Heart left ventricle (tissue), 16 donors: ENCODE measurements at regions of chr9 and their contacts with region 1.

Region 1: DNA sequence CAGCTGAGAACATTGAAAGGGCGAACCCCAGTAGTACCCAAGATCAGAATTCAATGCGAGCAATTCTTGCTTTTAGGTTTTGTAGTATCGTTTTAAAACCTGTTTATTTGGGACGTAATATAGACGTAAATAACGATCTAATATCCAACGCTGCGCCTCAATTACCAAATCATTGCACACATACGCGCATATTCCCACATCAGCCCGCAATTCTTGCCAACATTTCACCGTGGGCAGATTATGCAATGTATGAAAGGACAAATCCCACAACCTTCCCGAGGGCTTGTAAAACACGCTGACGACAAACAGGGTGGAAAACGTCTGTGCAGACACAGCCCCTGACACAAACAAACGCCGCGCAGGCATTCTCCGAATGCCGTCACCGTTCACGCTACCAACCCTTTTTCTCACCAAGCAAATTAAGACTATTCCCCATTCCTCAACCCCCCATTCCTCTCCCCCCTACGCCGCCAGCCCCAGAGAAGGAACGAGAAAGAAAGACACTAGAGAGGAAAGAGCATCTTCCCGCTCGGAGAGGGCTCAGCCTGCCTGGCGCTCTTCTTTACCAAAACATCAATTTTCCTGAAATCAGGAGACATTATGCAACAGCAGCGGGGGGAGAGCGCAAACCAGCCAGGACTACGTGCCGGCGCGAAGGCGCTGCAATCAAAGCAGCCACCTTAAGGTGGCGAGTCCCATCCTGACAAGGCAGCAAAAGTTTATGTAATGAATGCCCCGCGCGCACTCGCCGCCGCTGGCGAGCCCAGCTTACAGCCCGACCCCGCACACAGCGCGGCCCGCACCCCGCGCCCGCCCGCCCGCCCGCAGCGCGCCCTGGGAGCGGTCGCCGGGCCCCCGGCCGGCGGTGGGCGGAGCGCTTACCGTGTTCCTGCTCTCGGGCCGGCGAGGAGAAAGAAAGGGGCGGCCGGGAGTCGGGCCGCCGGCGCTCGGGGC is 597 bp downstream of the NFIL3 start:
- DNase-seq: peak; percentile 52 to 71 (median 69)
- ATAC-seq: peak; percentile 14 to 51 (median 34)
- H3K4me3 ChIP-seq: peak overlapping the region; percentile 44 to 88 (median 72)
- H3K27ac ChIP-seq: peak overlapping the region; percentile 86 to 97 (median 93)
- H3K4me1 ChIP-seq: peaks cover 0 to 65% (median 32%) of the 10 kb centered on the region in 12 donors
- H3K27me3 ChIP-seq: no peaks in the 10 kb centered on the region
- CTCF ChIP-seq: peak in 8 of 12 donors; percentile 5 to 53 (median 19)
- POLR2A ChIP-seq: peak in 1 of 2 donors; percentile 32

Region 2: GRCh38 chr9:90607701-90608516 is 815.1 kb before region 1 on chr9:
- intact Hi-C with region 1: no loop called
- DNase-seq: no peak
- ATAC-seq: no peak
- H3K4me3 ChIP-seq: no peak overlapping the region
- H3K27ac ChIP-seq: no peak overlapping the region
- H3K4me1 ChIP-seq: no peaks in the 10 kb centered on the region
- H3K27me3 ChIP-seq: peaks cover 0 to 15% (median 0%) of the 10 kb centered on the region in 9 donors
- CTCF ChIP-seq: no peak
- POLR2A ChIP-seq: no peak

Region 3: DNA sequence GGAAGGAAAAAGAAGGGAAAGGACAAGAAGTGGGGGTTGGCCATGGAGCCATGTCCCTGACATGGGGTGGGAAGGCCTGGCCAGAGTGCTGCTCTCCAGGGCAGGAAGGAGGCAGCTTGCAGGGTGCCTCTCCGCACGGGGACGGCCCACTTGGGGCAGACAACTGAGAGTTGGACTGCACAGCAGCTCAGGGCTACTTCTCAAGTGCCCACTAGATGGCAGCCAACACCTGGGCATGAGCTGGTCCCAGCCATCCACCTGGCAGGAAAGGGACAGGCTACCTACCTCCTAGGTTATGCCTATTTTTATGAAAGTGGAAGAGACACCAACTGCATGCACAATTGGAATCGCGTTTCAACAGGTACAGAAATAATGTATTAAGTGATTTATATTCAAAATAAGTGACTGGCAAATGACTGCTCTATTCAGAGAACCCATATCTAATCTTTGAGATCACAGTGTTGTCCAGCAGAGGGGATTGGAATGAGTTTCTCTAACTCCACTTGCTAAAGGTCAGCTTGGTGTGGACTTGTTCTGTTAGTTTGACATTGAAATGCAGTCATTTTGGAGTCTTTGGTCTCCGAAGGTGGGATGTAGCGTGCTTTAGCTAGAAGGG is 508.1 kb before region 1 on chr9:
- intact Hi-C with region 1: loop called in 7 of 10 experiments (anchors 2 to 5 kb)
- DNase-seq: peak; percentile 61 to 83 (median 72)
- ATAC-seq: peak; percentile 66 to 90 (median 85)
- H3K4me3 ChIP-seq: no peak overlapping the region
- H3K27ac ChIP-seq: no peak overlapping the region
- H3K4me1 ChIP-seq: peaks cover 0 to 4% (median 0%) of the 10 kb centered on the region in 12 donors
- H3K27me3 ChIP-seq: peaks cover 0 to 7% (median 0%) of the 10 kb centered on the region in 9 donors
- CTCF ChIP-seq: peak; percentile 76 to 95 (median 88)
- POLR2A ChIP-seq: no peak

Region 4: GRCh38 chr9:91036826-91037510 is 386.1 kb before region 1 on chr9:
- intact Hi-C with region 1: loop called in 6 of 10 experiments (anchors 2 to 5 kb)
- DNase-seq: peak; percentile 76 to 82 (median 78)
- ATAC-seq: peak; percentile 86 to 99 (median 98)
- H3K4me3 ChIP-seq: no peak overlapping the region
- H3K27ac ChIP-seq: no peak overlapping the region
- H3K4me1 ChIP-seq: peaks cover 0 to 20% (median 10%) of the 10 kb centered on the region in 12 donors
- H3K27me3 ChIP-seq: peaks cover 0 to 7% (median 0%) of the 10 kb centered on the region in 9 donors
- CTCF ChIP-seq: peak; percentile 55 to 78 (median 64)
- POLR2A ChIP-seq: no peak

Region 5: DNA sequence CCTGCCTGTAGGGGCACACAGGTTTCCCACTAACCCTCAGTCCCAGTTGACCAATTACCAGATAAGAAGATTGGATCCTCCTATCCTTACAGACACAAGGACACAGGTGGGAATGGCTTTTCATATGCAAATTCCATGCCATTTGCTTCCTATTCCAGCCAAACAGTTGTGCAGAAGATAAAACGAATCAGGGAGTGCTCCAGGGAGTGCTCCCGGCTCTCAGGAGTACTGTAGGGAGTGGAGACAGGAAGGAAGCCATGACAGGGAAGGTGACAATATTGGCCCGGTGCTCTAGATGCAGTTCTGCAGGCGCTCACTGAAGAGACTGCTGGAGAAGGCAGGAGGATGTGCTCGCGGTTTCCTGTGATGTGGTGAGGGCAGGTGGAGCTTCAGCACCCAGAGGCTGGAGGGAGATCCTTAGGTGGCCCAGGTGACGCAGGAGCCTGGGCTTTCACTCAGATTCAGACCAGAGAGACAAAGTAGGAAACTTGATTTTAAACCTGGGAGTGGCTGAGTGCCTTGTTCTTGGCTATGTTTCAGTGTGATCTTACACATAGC is 321.3 kb before region 1 on chr9:
- intact Hi-C with region 1: loop called in 5 of 10 experiments (anchors 5 to 10 kb)
- DNase-seq: no peak
- ATAC-seq: no peak
- H3K4me3 ChIP-seq: no peak overlapping the region
- H3K27ac ChIP-seq: peak overlapping the region in 10 of 12 donors; percentile 62 to 93 (median 80)
- H3K4me1 ChIP-seq: peaks cover 3 to 41% (median 30%) of the 10 kb centered on the region in 12 donors
- H3K27me3 ChIP-seq: no peaks in the 10 kb centered on the region
- CTCF ChIP-seq: no peak
- POLR2A ChIP-seq: no peak

Region 6: DNA sequence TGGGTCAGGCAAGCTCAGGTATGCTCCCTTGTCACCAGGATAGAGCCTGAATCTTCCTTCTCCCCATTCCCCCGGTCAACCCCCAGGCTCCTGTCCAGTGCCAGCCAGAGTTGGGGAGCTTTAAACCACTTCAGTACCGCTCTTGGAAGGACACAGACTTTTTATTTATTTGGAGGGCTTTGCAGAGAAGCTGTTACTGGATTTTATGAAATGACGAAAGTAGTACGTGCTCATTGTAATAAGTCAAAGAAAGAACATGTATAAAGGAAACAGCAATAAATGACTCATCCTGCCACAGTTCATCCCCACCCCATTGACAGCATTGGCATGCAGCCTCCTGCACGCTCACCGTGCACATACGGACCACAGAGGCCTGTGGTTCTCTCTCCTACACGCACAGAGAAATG is 291.6 kb before region 1 on chr9:
- intact Hi-C with region 1: no loop called
- DNase-seq: no peak
- ATAC-seq: peak in 3 of 4 donors; percentile 39 to 54 (median 51)
- H3K4me3 ChIP-seq: no peak overlapping the region
- H3K27ac ChIP-seq: no peak overlapping the region
- H3K4me1 ChIP-seq: peaks cover 0 to 13% (median 0%) of the 10 kb centered on the region in 12 donors
- H3K27me3 ChIP-seq: no peaks in the 10 kb centered on the region
- CTCF ChIP-seq: no peak
- POLR2A ChIP-seq: no peak

Region 7: DNA sequence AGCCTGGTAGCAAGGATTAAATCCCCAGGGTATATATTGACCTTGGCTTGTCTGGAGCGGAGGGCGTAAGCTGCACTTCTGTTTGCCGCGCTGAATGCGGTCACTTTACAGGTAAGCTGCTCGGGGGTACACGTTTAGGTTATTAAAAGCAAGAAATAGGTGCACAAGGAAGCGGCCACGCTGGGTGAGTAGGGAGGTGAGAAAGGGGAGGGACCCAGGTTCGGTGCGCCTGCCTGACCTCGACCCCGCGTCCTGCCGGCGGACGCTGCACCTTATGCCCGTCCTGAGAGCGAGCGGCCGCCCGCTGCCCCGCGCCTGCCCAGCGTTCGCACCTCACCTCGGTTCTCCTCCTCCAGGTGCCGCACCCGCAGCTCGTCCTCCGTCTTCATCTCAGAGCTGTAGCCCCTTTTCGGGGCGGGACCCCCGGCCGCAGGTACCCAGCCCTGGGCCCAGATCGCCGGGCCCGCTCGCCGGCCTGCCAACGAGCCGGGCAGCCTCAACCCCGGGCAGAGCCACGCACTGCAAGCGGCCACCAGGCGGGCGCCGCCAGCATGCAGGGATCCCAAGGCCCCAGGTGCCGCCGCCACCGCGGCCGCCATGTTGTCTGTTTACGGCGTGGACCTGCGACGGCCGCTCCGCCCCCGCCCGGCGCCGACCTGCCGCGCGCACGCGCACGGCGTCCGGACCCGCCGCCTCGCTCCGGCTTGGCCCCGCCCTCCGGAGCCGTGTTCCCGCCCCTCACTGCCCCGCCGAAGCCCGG is 61.6 kb before region 1 on chr9 and contains the start of gene AUH:
- intact Hi-C with region 1: loop called (anchors 2 to 10 kb)
- DNase-seq: peak; percentile 87 to 95 (median 88)
- ATAC-seq: peak; percentile 89 to 100 (median 98)
- H3K4me3 ChIP-seq: peak within 1 kb of the TSS; percentile 93 to 100 (median 98)
- H3K27ac ChIP-seq: peak within 1 kb of the TSS; percentile 67 to 97 (median 92)
- H3K4me1 ChIP-seq: peaks cover 0 to 43% (median 28%) of the 10 kb centered on the region in 12 donors
- H3K27me3 ChIP-seq: no peaks in the 10 kb centered on the region
- CTCF ChIP-seq: no peak
- POLR2A ChIP-seq: peak in 1 of 2 donors; percentile 61
- total RNA-seq, gene AUH: 28.5 to 54.7 (median 39.7) TPM

Region 8: DNA sequence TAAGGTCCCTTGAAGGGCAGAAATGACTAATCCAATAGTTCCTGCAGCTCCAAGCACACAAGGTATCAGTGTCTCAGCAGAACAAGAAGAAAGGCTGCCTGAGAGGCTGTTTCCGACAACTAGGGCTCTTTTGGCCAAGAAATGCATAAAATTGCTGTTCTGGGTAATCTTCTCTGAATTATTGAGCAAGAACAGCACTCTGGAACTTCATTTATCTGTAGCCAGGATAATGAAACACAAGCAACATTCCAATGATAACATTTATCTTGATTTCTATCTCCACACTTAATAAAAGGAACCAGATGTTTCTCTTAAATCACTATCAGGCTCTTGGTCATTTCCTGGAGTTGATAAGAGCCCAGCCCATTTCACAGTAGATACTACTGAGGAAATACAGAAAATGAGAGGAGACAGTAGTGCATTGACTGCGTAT is 44.3 kb before region 1 on chr9:
- intact Hi-C with region 1: no loop called
- DNase-seq: no peak
- ATAC-seq: peak in 3 of 4 donors; percentile 11 to 33 (median 28)
- H3K4me3 ChIP-seq: no peak overlapping the region
- H3K27ac ChIP-seq: no peak overlapping the region
- H3K4me1 ChIP-seq: peaks cover 0 to 14% (median 0%) of the 10 kb centered on the region in 12 donors
- H3K27me3 ChIP-seq: no peaks in the 10 kb centered on the region
- CTCF ChIP-seq: no peak
- POLR2A ChIP-seq: no peak

Region 9: DNA sequence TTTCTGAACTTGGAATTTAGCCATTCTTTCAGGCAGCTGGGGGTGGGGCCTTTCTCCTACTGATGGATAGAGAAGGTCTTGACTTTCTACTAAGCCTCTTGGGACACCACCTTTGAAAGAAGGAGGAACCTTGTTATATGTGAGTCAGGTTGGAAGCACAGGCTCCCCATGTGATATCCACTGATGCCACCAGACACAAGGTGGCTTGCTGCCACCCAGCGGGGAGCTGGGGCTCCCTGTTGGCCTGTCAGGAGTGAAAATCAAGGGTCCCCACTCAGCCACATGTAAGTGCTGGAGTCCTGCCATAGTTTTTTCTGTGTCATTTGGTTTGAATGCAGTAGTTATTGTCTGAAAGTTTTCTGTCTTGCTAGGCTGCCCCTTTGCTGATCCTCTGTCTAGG is 253.0 kb after region 1 on chr9:
- intact Hi-C with region 1: loop called in 3 of 10 experiments (anchors 5 to 10 kb)
- DNase-seq: no peak
- ATAC-seq: peak in 1 of 4 donors; percentile 50
- H3K4me3 ChIP-seq: no peak overlapping the region
- H3K27ac ChIP-seq: no peak overlapping the region
- H3K4me1 ChIP-seq: no peaks in the 10 kb centered on the region
- H3K27me3 ChIP-seq: peaks cover 0 to 3% (median 0%) of the 10 kb centered on the region in 9 donors
- CTCF ChIP-seq: peak in 7 of 12 donors; percentile 7 to 37 (median 30)
- POLR2A ChIP-seq: no peak